Activated T-helper 1 cell treated with anti-CD3 and anti-CD28 coated beads, Interleukin-12 subunit alpha, Interleukin-12 subunit beta, Interleukin-2, Interleukin-4 antibody, amounts not matched to agents 30 ng/mL and 10 ng/mL and 1 ng/mL, durations not matched to agents 14 hours and 24 hours and 36 hours (primary cell): ENCODE measurements at regions of chr12 and their contacts with region 1.

Region 1: DNA sequence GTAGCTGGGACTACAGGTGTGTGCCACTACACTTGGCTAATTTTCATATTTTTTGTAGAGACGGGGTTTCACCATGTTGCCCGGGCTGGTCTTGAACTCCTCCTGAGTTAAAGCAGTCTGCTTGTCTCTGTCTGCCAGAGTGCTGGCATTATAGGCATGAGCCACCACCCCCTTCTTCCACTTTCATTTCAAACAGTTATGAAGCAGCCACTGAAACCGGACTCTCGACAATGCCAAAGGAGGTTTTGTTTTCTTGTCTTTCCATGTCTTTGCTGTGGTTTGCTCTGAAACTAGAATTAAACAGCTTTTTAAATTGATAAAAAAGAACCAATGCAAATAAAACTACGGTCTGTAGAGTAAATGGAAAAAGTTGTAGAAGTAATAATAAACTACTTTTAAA is 30.4 kb downstream of the RAP1B start:
- DNase-seq: peak; percentile 36
- H3K4me3 Mint-ChIP-seq: peak overlapping the region; percentile 61
- H3K27ac Mint-ChIP-seq: peak overlapping the region; percentile 71
- H3K4me1 Mint-ChIP-seq: peaks cover 63% of the 10 kb centered on the region
- H3K27me3 Mint-ChIP-seq: no peaks in the 10 kb centered on the region

Region 2: GRCh38 chr12:68364893-68365725 is 276.0 kb before region 1 on chr12:
- intact Hi-C with region 1: loop called (anchors 1 kb)
- DNase-seq: peak; percentile 85
- H3K4me3 Mint-ChIP-seq: peak overlapping the region; percentile 77
- H3K27ac Mint-ChIP-seq: peak overlapping the region; percentile 92
- H3K4me1 Mint-ChIP-seq: peaks cover 76% of the 10 kb centered on the region
- H3K27me3 Mint-ChIP-seq: no peaks in the 10 kb centered on the region

Region 3: DNA sequence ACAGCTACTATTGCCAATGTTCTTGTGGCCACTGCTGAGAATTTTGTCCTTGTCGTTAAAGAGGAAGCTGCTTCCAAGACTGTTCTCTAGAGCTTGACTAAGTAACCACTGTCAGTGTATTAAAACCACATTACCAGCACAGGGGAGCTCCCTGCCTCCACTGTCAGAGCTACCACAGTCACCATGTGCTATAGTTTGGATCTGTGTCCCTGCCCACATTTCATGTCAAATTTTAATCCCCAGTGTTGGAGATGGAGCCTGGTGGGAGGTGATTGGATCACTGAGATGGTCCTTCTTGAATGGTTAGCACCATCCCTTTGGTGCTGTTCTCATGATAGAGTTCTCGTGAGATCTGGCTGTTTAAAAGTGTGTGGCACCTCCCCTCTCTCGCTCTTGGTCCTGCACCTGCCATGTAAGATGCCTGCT is 53.7 kb before region 1 on chr12:
- intact Hi-C with region 1: loop called (anchors 1 kb)
- DNase-seq: peak; percentile 38
- H3K4me3 Mint-ChIP-seq: peak overlapping the region; percentile 7
- H3K27ac Mint-ChIP-seq: peak overlapping the region; percentile 31
- H3K4me1 Mint-ChIP-seq: peaks cover 32% of the 10 kb centered on the region
- H3K27me3 Mint-ChIP-seq: no peaks in the 10 kb centered on the region

Region 4: DNA sequence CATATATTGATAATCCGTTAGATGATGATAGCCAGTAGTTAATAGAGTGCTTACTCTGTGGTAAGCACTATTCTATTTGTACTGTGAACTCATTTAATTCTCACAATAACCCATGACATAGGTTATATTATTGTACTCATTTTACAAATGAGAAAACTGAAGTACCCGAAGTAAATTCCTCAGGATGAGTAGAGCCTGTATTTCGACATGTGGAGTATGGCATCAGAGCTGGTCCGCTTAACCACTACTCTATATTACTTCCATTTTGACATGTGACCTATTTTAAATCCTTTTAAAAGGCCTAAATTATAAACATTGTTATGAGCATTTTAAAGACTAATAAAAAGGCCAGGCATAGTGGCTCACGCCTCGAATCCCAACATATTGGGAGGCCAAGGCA is 38.4 kb before region 1 on chr12:
- intact Hi-C with region 1: no loop called
- DNase-seq: no peak
- H3K4me3 Mint-ChIP-seq: no peak overlapping the region
- H3K27ac Mint-ChIP-seq: no peak overlapping the region
- H3K4me1 Mint-ChIP-seq: peaks cover 28% of the 10 kb centered on the region
- H3K27me3 Mint-ChIP-seq: no peaks in the 10 kb centered on the region